ENCODE measurements at regions of chr3 and their contacts with region 1.

Region 1: DNA sequence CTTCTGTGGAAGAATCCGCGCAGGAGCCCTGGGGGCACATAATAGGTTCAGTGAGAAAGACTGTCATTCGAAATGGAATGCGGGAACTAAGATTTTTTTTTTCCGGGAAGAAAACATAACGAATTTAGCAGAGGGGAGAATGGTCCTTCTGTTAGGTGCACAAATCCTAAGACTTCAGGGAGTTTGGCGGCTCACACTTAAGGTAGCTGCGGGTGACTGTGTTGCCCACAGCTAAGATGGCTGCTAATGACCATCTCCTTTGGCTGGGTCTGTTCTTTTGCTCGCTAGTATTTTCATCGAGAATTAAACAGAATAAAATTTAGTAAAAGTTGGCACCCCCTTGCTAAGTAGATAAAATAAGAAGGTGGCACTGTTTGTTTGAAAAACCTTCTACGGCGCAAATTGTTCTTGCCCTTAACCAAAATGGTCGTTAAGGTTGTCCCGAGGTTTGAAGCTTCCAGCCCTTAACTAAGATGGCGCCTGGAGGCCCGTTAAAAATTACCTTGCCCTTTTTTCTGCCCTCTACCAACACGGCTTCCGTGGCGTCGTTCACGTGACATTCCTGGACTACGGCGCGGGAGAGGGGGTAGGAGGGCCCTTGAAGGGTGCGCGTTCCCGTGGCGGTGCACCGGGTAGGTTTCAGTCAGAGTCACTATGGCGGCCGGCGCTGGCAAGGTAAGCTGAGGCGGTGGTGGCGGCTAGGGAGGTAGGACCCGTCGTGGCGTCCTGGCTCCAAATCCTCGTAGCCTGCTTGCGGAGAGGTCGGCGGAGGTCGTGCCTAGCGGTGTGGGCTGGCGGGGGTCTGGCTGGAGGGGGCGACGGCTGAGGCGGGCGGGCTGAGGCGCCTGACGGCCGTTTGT is at the start of gene SLMAP:
- DNase-seq: peak; percentile 96
- ATAC-seq: peak; percentile 94
- H3K4me3 ChIP-seq: peak within 1 kb of the TSS; percentile 88 to 96 (median 94)
- H3K27ac ChIP-seq: peak within 1 kb of the TSS; percentile 81
- H3K4me1 ChIP-seq: peaks cover 26% of the 10 kb centered on the region
- H3K27me3 ChIP-seq: no peaks in the 10 kb centered on the region; a peak in 1 of 5 replicates
- CTCF ChIP-seq: no peak; the same call in 1 of the 2 replicates
- EP300 ChIP-seq: peak; percentile 43 to 63; a peak in 1 of 4 replicates
- POLR2A ChIP-seq: peak; percentile 83 to 91
- RAD21 ChIP-seq: no peak
- total RNA-seq, gene SLMAP: 48.3 and 61.3 TPM in 2 replicates

Region 2: GRCh38 chr3:57597122-57597923 is 158.6 kb before region 1 on chr3 and contains the start of gene ARF4:
- CTCF ChIA-PET with region 1: no interaction called
- POLR2A ChIA-PET with region 1: interaction called, 19 read pairs
- in situ Hi-C with region 1: no loop called
- intact Hi-C with region 1: loop called (anchors 5 kb)
- DNase-seq: peak; percentile 99
- ATAC-seq: peak; percentile 92
- H3K4me3 ChIP-seq: peak within 1 kb of the TSS; percentile 94 to 97 (median 96)
- H3K27ac ChIP-seq: peak within 1 kb of the TSS; percentile 99
- H3K4me1 ChIP-seq: peaks cover 46% of the 10 kb centered on the region
- H3K27me3 ChIP-seq: no peaks in the 10 kb centered on the region; a peak in 2 of 5 replicates
- CTCF ChIP-seq: peak; percentile 69
- EP300 ChIP-seq: peak; percentile 3 to 83; a peak in 2 of 4 replicates
- POLR2A ChIP-seq: peak; percentile 93 to 99
- RAD21 ChIP-seq: peak; percentile 29; the same call in 1 of the 2 replicates
- total RNA-seq, gene ARF4: 184 and 247 TPM in 2 replicates

Region 3: GRCh38 chr3:57692259-57693147 is 63.4 kb before region 1 on chr3 and contains the start of gene DENND6A:
- CTCF ChIA-PET with region 1: no interaction called
- POLR2A ChIA-PET with region 1: interaction called, 13 read pairs
- in situ Hi-C with region 1: no loop called
- intact Hi-C with region 1: loop called (anchors 2 kb)
- DNase-seq: peak; percentile 87
- ATAC-seq: peak; percentile 96
- H3K4me3 ChIP-seq: peak within 1 kb of the TSS; percentile 70 to 82 (median 76)
- H3K27ac ChIP-seq: peak within 1 kb of the TSS; percentile 90
- H3K4me1 ChIP-seq: peaks cover 40% of the 10 kb centered on the region
- H3K27me3 ChIP-seq: no peaks in the 10 kb centered on the region
- CTCF ChIP-seq: no peak
- EP300 ChIP-seq: no peak
- POLR2A ChIP-seq: peak; percentile 89
- RAD21 ChIP-seq: peak; percentile 75
- total RNA-seq, gene DENND6A: 9.4 and 12.8 TPM in 2 replicates

Region 4: DNA sequence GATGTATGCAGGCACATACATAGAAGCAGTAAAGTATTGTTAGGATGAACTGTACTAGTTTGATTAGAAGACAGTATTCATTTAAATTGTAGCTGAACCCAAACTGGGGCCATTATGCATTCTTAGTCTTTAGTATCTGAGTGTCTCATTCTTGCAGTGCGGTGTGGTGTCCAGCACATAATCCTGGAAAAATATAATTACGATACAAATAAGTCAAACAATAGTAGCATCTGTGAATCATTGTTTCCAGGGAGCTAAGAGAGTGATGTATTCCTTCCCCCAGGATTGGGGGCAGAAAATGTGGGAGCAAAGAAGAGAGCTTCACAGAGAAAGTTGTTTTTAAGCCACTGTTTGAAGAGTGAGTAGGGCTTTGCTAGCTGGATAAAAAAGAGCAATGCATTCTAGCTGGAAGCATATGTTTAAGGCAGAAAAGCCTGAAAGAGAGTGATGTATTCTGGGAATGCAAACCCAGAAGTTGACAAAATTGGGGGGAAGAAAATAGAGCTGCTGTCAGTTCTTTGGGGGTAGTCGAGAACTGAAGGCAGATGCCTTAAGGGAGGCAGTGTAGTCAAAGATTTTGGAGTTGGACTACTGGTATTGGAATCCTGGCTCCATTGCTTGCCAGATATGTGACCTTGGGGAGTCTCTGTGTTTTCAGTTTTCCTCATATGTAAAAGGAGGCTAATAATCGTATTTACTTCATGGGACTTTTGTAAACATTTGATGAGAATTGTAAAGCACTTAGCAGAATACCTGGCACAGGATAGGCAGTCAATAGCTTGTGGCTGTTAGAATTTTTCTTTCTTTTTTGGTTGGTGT is 14.3 kb after region 1 on chr3:
- CTCF ChIA-PET with region 1: no interaction called
- POLR2A ChIA-PET with region 1: interaction called, 12 read pairs
- in situ Hi-C with region 1: no loop called
- intact Hi-C with region 1: no loop called
- DNase-seq: no peak
- ATAC-seq: no peak
- H3K4me3 ChIP-seq: no peak overlapping the region
- H3K27ac ChIP-seq: peak overlapping the region; percentile 21
- H3K4me1 ChIP-seq: peaks cover 34% of the 10 kb centered on the region
- H3K27me3 ChIP-seq: no peaks in the 10 kb centered on the region
- CTCF ChIP-seq: no peak
- EP300 ChIP-seq: no peak
- POLR2A ChIP-seq: no peak
- RAD21 ChIP-seq: no peak

Region 5: GRCh38 chr3:57826245-57826951 is 70.5 kb after region 1 on chr3:
- CTCF ChIA-PET with region 1: no interaction called
- POLR2A ChIA-PET with region 1: interaction called, 5 read pairs
- in situ Hi-C with region 1: no loop called
- intact Hi-C with region 1: loop called (anchors 2 kb)
- DNase-seq: no peak
- ATAC-seq: peak; percentile 55
- H3K4me3 ChIP-seq: no peak overlapping the region
- H3K27ac ChIP-seq: peak overlapping the region; percentile 78
- H3K4me1 ChIP-seq: peaks cover 58% of the 10 kb centered on the region
- H3K27me3 ChIP-seq: no peaks in the 10 kb centered on the region
- CTCF ChIP-seq: peak; percentile 40
- EP300 ChIP-seq: no peak
- POLR2A ChIP-seq: no peak
- RAD21 ChIP-seq: no peak

Region 6: GRCh38 chr3:57840473-57840872 is 84.6 kb after region 1 on chr3:
- CTCF ChIA-PET with region 1: no interaction called
- POLR2A ChIA-PET with region 1: no interaction called
- in situ Hi-C with region 1: no loop called
- intact Hi-C with region 1: loop called (anchors 5 kb)
- DNase-seq: no peak
- ATAC-seq: no peak
- H3K4me3 ChIP-seq: no peak overlapping the region
- H3K27ac ChIP-seq: peak overlapping the region; percentile 40
- H3K4me1 ChIP-seq: peaks cover 38% of the 10 kb centered on the region
- H3K27me3 ChIP-seq: no peaks in the 10 kb centered on the region
- CTCF ChIP-seq: no peak
- EP300 ChIP-seq: no peak
- POLR2A ChIP-seq: no peak
- RAD21 ChIP-seq: no peak

Region 7: GRCh38 chr3:57883071-57883470 is 127.2 kb after region 1 on chr3:
- CTCF ChIA-PET with region 1: no interaction called
- POLR2A ChIA-PET with region 1: no interaction called
- in situ Hi-C with region 1: no loop called
- intact Hi-C with region 1: no loop called
- DNase-seq: no peak
- ATAC-seq: no peak
- H3K4me3 ChIP-seq: no peak overlapping the region
- H3K27ac ChIP-seq: no peak overlapping the region
- H3K4me1 ChIP-seq: no peaks in the 10 kb centered on the region
- H3K27me3 ChIP-seq: no peaks in the 10 kb centered on the region
- CTCF ChIP-seq: no peak
- EP300 ChIP-seq: no peak
- POLR2A ChIP-seq: no peak
- RAD21 ChIP-seq: no peak

Region 8: DNA sequence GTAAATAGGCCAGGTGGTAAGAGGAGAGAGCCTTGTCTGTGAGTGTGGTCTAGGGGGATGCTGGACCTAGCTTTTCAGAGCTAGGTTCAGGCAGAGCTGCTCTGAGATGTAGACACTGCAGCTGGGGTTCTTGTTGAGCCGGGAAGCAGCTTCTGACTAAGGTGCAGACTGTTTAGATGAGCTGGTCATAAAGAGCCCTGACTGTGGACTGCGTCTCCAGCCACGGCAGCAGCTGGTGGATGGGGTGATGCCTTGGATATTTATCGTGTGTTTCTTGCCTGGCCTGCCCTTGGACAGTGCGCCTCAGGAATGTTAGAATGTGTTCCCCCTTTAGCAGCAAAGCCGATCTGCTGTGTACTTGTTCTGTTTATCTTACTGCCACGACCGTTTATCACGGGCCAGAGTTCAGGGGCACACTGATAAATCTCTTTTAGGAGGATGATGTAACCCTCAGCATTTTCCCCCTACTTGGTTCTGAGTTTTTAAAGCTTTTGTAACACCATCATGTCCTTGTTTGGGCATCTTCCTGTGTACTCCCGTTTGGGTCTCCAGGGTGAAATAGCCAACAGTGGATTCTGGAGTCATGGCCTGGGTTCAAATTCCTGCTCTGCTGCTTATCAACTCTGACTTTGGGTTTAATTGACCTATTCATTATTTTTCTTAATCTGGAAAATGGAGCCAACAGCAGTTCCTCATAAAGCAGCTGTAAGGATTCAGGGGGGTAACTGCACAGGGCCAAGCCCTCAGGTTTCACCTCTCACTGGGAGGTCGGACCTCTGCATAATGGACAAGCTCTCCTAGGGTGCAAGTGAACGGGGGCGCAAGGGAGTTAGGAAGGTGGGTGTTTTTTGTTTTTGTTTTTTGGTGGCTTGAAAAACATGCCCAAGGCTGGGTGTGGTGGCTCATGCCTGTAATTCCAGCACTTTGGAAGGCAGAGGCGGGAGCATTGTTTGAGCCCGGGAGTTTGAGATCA is 303.7 kb after region 1 on chr3:
- CTCF ChIA-PET with region 1: no interaction called
- POLR2A ChIA-PET with region 1: no interaction called
- in situ Hi-C with region 1: no loop called
- intact Hi-C with region 1: no loop called
- DNase-seq: peak; percentile 99
- ATAC-seq: peak; percentile 96
- H3K4me3 ChIP-seq: peak overlapping the region in 1 of 3 experiments; percentile 31; a peak in 2 of 6 replicates
- H3K27ac ChIP-seq: peak overlapping the region; percentile 94
- H3K4me1 ChIP-seq: peaks cover 92% of the 10 kb centered on the region
- H3K27me3 ChIP-seq: no peaks in the 10 kb centered on the region; a peak in 1 of 5 replicates
- CTCF ChIP-seq: 0 out of 2 replicates have a peak, but pooled peaks have one; percentile 16
- EP300 ChIP-seq: peak; percentile 95 to 99
- POLR2A ChIP-seq: peak; percentile 15 to 88; a peak in 3 of 4 replicates
- RAD21 ChIP-seq: peak; percentile 44; the same call in 1 of the 2 replicates

Region 9: DNA sequence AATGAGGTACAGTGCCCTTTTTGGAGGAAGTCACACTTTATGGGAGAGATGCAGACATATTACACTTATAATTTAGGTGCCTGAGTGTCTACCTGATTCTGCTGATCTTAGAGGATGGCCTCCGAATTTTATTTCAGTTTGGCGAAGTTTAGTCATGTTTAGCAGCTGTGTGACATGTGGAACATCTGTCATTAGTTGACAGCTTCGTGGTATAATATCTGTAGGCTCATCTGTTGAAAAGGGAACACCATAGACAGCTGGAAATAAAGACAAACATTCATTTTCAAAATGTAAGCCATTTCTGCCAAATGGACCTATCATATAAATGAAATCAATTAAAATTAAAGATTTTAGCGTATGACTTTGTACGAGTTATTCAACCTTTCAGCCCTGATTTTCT is 1128.6 kb after region 1 on chr3:
- CTCF ChIA-PET with region 1: no interaction called
- POLR2A ChIA-PET with region 1: no interaction called
- in situ Hi-C with region 1: no loop called
- intact Hi-C with region 1: no loop called
- DNase-seq: no peak
- ATAC-seq: no peak
- H3K4me3 ChIP-seq: no peak overlapping the region
- H3K27ac ChIP-seq: no peak overlapping the region
- H3K4me1 ChIP-seq: no peaks in the 10 kb centered on the region
- H3K27me3 ChIP-seq: no peaks in the 10 kb centered on the region
- CTCF ChIP-seq: no peak
- EP300 ChIP-seq: no peak
- POLR2A ChIP-seq: no peak
- RAD21 ChIP-seq: no peak

Measured in HepG2 (cell line).